ENCODE measurements at regions of chr21 and their contacts with region 1.

Region 1: DNA sequence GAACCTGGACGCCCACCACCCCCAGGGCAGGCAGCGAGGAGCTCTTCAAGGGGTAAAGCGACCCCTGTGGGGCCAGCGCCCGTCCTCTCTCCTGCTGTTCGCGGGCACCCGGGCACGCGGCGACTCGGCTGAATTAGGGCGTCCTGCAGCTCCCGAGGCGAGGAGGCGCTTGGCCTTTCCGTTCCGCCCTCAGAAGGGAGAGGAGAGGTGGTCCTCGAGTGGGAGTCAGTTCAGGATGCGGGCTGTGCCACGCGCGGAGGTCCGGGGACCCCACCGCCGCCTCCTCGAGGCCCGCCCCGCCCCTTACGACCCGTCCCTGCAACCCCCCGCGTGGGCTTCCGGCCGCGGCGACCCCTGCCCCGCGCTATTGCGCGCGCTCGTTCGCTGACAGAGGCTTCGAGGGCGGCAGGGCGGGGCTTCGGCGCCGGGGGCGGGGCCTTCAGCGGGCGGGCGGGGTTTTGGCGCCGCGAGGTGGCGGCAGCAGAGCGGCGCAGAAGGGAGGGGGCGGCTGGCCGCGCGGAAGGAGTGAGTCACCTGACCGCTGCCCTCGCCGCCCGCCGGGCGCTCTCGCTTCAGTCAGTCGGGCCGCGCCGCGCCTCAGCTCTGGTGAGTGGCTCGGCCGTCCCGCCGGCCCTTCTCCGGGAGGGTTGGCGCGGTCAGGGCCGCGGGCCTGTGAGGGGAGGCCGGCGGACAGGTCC is at the start of gene BACH1:
- DNase-seq: peak; percentile 92 to 95
- ATAC-seq: peak; percentile 83 to 90 (median 86)
- H3K4me3 ChIP-seq: peak within 1 kb of the TSS; percentile 96
- H3K27ac ChIP-seq: peak within 1 kb of the TSS; percentile 98
- H3K4me1 ChIP-seq: peaks cover 24% of the 10 kb centered on the region
- H3K27me3 ChIP-seq: no peaks in the 10 kb centered on the region
- CTCF ChIP-seq: peak; percentile 18
- total RNA-seq, gene BACH1: 48.3 to 115 (median 72.4) TPM

Region 2: GRCh38 chr21:29091032-29091431 is 207.5 kb before region 1 on chr21:
- intact Hi-C with region 1: loop called in 1 of 2 experiments (anchors 10 kb)
- DNase-seq: no peak
- ATAC-seq: no peak
- H3K4me3 ChIP-seq: no peak overlapping the region
- H3K27ac ChIP-seq: no peak overlapping the region
- H3K4me1 ChIP-seq: peaks cover 14% of the 10 kb centered on the region
- H3K27me3 ChIP-seq: no peaks in the 10 kb centered on the region
- CTCF ChIP-seq: no peak

Region 3: GRCh38 chr21:29155118-29155932 is 143.2 kb before region 1 on chr21:
- intact Hi-C with region 1: loop called (anchors 2 to 5 kb)
- DNase-seq: peak; percentile 63 to 82
- ATAC-seq: peak; percentile 87 to 90 (median 88)
- H3K4me3 ChIP-seq: peak overlapping the region; percentile 34
- H3K27ac ChIP-seq: peak overlapping the region; percentile 87
- H3K4me1 ChIP-seq: peaks cover 58% of the 10 kb centered on the region
- H3K27me3 ChIP-seq: no peaks in the 10 kb centered on the region
- CTCF ChIP-seq: no peak

Region 4: DNA sequence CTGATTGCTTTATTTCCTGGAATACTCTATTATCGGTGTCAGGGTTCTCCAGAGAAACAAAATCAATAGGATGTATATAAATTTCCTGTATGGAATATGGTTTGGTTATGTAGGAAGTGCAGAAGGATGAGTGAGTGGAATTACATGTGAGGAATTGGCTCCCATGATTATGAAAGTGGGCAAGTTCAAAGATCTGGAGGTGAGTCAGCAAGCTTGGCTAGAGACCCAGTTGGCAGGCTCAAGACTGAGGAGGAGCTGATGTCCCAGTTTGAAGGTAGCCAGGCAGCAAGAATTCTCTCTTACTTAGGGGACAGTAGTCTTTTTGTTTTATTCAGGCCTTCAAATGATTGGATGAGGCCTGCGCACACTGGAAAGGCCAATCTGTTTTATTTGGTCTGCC is 110.6 kb before region 1 on chr21:
- intact Hi-C with region 1: loop called in 1 of 2 experiments (anchors 5 kb)
- DNase-seq: peak; percentile 68 to 72
- ATAC-seq: peak; percentile 92 to 98 (median 94)
- H3K4me3 ChIP-seq: no peak overlapping the region
- H3K27ac ChIP-seq: no peak overlapping the region
- H3K4me1 ChIP-seq: peaks cover 7% of the 10 kb centered on the region
- H3K27me3 ChIP-seq: no peaks in the 10 kb centered on the region
- CTCF ChIP-seq: no peak

Region 5: DNA sequence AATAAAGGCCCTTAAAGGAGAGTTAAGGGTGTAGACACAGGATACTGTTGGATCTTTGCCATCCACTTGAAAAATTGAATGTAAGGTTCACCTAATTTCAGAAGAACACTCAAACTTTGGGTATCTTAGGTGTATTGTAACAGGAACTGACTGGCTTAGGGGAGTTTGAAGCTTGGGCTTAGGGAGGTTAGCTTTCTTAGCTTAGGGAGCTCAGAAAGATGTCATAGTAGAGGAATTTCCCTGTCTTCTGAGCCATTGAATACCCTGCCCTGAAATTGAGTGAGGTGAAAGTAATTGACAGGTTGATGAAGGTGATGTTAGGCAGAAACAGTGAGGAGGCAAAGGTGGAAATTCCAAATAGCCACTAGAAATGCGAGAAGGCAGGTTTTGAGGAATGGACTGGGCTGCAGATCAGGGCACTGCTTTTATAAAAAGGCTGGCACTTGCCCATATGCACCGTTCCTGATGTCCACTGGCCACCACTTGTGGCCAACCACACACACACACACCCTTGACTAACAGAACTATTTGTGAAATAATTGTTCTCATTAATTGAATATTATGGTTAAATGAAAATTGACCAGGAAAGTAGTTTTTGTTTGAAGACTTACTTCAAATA is 16.7 kb after region 1 on chr21:
- intact Hi-C with region 1: no loop called
- DNase-seq: no peak
- ATAC-seq: peak in 3 of 4 donors; percentile 52 to 68 (median 63)
- H3K4me3 ChIP-seq: peak overlapping the region; percentile 8
- H3K27ac ChIP-seq: peak overlapping the region; percentile 24
- H3K4me1 ChIP-seq: peaks cover 84% of the 10 kb centered on the region
- H3K27me3 ChIP-seq: no peaks in the 10 kb centered on the region
- CTCF ChIP-seq: no peak

Region 6: DNA sequence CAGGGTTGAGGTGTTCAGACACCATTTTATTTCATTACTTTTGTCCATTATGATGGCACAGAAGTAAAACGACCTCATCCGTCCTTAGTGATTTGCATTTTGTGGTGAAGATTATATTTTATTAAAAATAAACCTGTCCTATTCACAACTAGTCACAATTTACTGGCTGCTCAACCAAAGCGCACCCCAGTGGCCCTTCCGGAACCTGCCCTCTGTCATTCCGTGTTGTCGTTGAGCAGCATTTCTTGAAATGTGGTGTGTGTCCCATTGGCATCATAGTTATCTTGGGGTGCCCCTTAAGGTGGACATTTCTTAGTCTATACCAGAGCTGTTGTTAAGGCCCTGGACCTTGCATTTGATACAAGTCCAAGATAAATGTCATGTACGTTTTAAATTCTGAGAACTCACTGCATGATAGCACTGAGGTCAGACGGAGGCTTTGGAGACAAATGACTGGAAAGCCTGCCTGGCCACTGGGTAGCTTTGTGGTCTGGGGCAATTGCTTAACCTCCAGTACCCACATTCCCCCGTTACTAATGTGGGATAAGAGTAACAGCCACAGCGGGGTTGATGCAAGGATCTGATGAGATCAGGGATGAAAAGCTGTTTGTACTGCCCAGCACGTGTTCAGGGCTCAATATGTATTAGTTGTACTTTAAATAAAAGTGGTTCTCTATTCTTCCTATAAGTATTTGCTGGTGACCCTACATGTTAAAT is 36.4 kb after region 1 on chr21:
- intact Hi-C with region 1: loop called in 1 of 2 experiments (anchors 5 kb)
- DNase-seq: no peak
- ATAC-seq: peak; percentile 4 to 84 (median 61)
- H3K4me3 ChIP-seq: no peak overlapping the region
- H3K27ac ChIP-seq: peak overlapping the region; percentile 31
- H3K4me1 ChIP-seq: peaks cover 70% of the 10 kb centered on the region
- H3K27me3 ChIP-seq: no peaks in the 10 kb centered on the region
- CTCF ChIP-seq: no peak

Region 7: GRCh38 chr21:29347274-29347681 is 48.8 kb after region 1 on chr21:
- intact Hi-C with region 1: loop called in 1 of 2 experiments (anchors 5 kb)
- DNase-seq: no peak
- ATAC-seq: peak in 2 of 4 donors; percentile 6 to 14
- H3K4me3 ChIP-seq: no peak overlapping the region
- H3K27ac ChIP-seq: no peak overlapping the region
- H3K4me1 ChIP-seq: peaks cover 26% of the 10 kb centered on the region
- H3K27me3 ChIP-seq: no peaks in the 10 kb centered on the region
- CTCF ChIP-seq: no peak